ENCODE measurements at regions of chr16 and their contacts with region 1.

Region 1: GRCh38 chr16:68417711-68418301 is 30.5 kb downstream of the SMPD3 start:
- DNase-seq: peak; percentile 64 to 93 (median 81)
- ATAC-seq: peak; percentile 88
- H3K4me3 ChIP-seq: peak overlapping the region; percentile 34
- H3K4me3 Mint-ChIP-seq: peak overlapping the region; percentile 82
- H3K27ac ChIP-seq: peak overlapping the region; percentile 76 to 88
- H3K27ac Mint-ChIP-seq: peak overlapping the region; percentile 94
- H3K4me1 ChIP-seq: peaks cover 81% of the 10 kb centered on the region
- H3K4me1 Mint-ChIP-seq: peaks cover 81% of the 10 kb centered on the region
- H3K27me3 ChIP-seq: no peaks in the 10 kb centered on the region
- H3K27me3 Mint-ChIP-seq: no peaks in the 10 kb centered on the region
- CTCF ChIP-seq: no peak

Region 2: GRCh38 chr16:68356249-68356918 is 61.4 kb before region 1 on chr16:
- CTCF ChIA-PET with region 1: no interaction called
- POLR2A ChIA-PET with region 1: interaction called, 10 read pairs
- intact Hi-C with region 1: no loop called
- DNase-seq: peak; percentile 31 to 86 (median 58)
- ATAC-seq: peak; percentile 88
- H3K4me3 ChIP-seq: peak overlapping the region; percentile 47
- H3K4me3 Mint-ChIP-seq: peak overlapping the region; percentile 80
- H3K27ac ChIP-seq: peak overlapping the region in 1 of 2 donors; percentile 21
- H3K27ac Mint-ChIP-seq: peak overlapping the region; percentile 33
- H3K4me1 ChIP-seq: peaks cover 42% of the 10 kb centered on the region
- H3K4me1 Mint-ChIP-seq: peaks cover 28% of the 10 kb centered on the region
- H3K27me3 ChIP-seq: no peaks in the 10 kb centered on the region
- H3K27me3 Mint-ChIP-seq: no peaks in the 10 kb centered on the region
- CTCF ChIP-seq: no peak

Region 3: GRCh38 chr16:68406451-68407152 is 11.2 kb before region 1 on chr16:
- CTCF ChIA-PET with region 1: interaction called, 3 read pairs
- POLR2A ChIA-PET with region 1: interaction called, 13 read pairs
- intact Hi-C with region 1: no loop called
- DNase-seq: no peak
- ATAC-seq: no peak
- H3K4me3 ChIP-seq: no peak overlapping the region
- H3K4me3 Mint-ChIP-seq: no peak overlapping the region
- H3K27ac ChIP-seq: no peak overlapping the region
- H3K27ac Mint-ChIP-seq: no peak overlapping the region
- H3K4me1 ChIP-seq: peaks cover 14% of the 10 kb centered on the region
- H3K4me1 Mint-ChIP-seq: peaks cover 15% of the 10 kb centered on the region
- H3K27me3 ChIP-seq: no peaks in the 10 kb centered on the region
- H3K27me3 Mint-ChIP-seq: no peaks in the 10 kb centered on the region
- CTCF ChIP-seq: no peak

Region 4: DNA sequence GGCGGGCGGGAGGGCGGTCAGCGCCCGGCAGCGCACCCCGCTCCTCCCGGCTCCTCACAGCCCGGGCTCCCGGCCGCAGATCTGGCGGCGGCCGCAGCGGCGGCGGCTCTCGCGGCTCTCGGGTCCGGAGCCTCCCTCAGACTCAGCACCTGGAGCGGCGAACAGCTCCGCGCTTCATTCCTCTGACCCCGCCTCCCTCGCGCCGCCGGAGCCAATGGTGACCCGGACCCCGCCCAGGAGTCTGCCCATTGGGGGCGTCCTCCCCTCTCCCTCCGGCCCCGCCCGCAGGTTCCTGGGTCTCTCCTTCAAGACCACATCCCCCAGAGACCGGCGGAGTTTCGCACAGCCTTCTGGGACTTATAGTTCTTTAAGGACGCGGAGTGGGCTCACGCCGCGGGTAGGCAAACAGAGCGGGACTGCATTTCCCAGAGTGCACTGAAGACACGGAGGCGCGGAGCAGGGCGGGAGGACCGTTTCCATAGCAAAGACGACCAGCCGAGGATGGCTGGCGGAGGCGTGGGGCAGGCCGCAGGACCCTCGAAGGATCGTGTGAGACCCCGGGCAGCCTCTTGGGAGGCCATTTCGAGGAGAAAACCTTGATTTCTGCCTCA is 30.7 kb after region 1 on chr16 and contains the start of gene SMPD3:
- CTCF ChIA-PET with region 1: interaction called, 4 read pairs
- POLR2A ChIA-PET with region 1: interaction called, 15 read pairs
- intact Hi-C with region 1: loop called (anchors 1 kb)
- DNase-seq: peak; percentile 95 to 99 (median 98)
- ATAC-seq: peak; percentile 98
- H3K4me3 ChIP-seq: peak within 1 kb of the TSS; percentile 58
- H3K4me3 Mint-ChIP-seq: peak within 1 kb of the TSS; percentile 77
- H3K27ac ChIP-seq: no peak within 1 kb of the TSS
- H3K27ac Mint-ChIP-seq: no peak within 1 kb of the TSS
- H3K4me1 ChIP-seq: peaks cover 44% of the 10 kb centered on the region
- H3K4me1 Mint-ChIP-seq: peaks cover 21% of the 10 kb centered on the region
- H3K27me3 ChIP-seq: peaks cover 26 to 31% of the 10 kb centered on the region in 2 experiments
- H3K27me3 Mint-ChIP-seq: peaks cover 29% of the 10 kb centered on the region
- CTCF ChIP-seq: no peak
- total RNA-seq, gene SMPD3: 0.89 to 1.1 TPM

Region 5: DNA sequence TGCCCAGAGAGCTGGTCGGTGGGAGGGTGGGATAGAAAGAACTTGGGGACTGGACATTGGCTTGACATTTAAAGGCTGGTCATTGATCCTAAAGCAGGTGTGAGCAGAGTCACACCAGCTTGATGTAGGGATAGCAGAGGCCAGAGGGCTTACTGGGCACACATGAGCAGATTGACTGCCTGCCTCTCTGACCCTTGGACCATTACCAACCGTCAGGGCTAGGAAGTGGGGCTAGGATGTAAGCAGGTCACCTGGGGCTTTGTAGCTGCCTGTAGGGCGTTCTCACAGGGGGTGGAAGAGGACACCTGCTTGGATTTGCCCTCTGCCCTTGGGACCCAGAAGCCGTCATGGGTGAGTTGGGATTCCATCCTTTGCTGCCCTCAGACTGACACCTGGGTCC is 41.7 kb after region 1 on chr16:
- CTCF ChIA-PET with region 1: no interaction called
- POLR2A ChIA-PET with region 1: no interaction called
- intact Hi-C with region 1: no loop called
- DNase-seq: no peak
- ATAC-seq: no peak
- H3K4me3 ChIP-seq: no peak overlapping the region
- H3K4me3 Mint-ChIP-seq: no peak overlapping the region
- H3K27ac ChIP-seq: no peak overlapping the region
- H3K27ac Mint-ChIP-seq: no peak overlapping the region
- H3K4me1 ChIP-seq: no peaks in the 10 kb centered on the region
- H3K4me1 Mint-ChIP-seq: no peaks in the 10 kb centered on the region
- H3K27me3 ChIP-seq: no peaks in the 10 kb centered on the region
- H3K27me3 Mint-ChIP-seq: no peaks in the 10 kb centered on the region
- CTCF ChIP-seq: no peak

Region 6: GRCh38 chr16:68478526-68479250 is 60.9 kb after region 1 on chr16:
- CTCF ChIA-PET with region 1: no interaction called
- POLR2A ChIA-PET with region 1: no interaction called
- intact Hi-C with region 1: no loop called
- DNase-seq: no peak
- ATAC-seq: no peak
- H3K4me3 ChIP-seq: no peak overlapping the region
- H3K4me3 Mint-ChIP-seq: no peak overlapping the region
- H3K27ac ChIP-seq: no peak overlapping the region
- H3K27ac Mint-ChIP-seq: no peak overlapping the region
- H3K4me1 ChIP-seq: no peaks in the 10 kb centered on the region
- H3K4me1 Mint-ChIP-seq: no peaks in the 10 kb centered on the region
- H3K27me3 ChIP-seq: no peaks in the 10 kb centered on the region
- H3K27me3 Mint-ChIP-seq: no peaks in the 10 kb centered on the region
- CTCF ChIP-seq: no peak

Region 7: GRCh38 chr16:68520649-68521086 is 102.9 kb after region 1 on chr16:
- CTCF ChIA-PET with region 1: interaction called, 14 read pairs
- POLR2A ChIA-PET with region 1: interaction called, 3 read pairs
- intact Hi-C with region 1: no loop called
- DNase-seq: peak; percentile 77 to 95 (median 83)
- ATAC-seq: peak; percentile 98
- H3K4me3 ChIP-seq: peak overlapping the region; percentile 26
- H3K4me3 Mint-ChIP-seq: peak overlapping the region; percentile 43
- H3K27ac ChIP-seq: no peak overlapping the region
- H3K27ac Mint-ChIP-seq: peak overlapping the region; percentile 71
- H3K4me1 ChIP-seq: peaks cover 10% of the 10 kb centered on the region
- H3K4me1 Mint-ChIP-seq: peaks cover 7% of the 10 kb centered on the region
- H3K27me3 ChIP-seq: no peaks in the 10 kb centered on the region
- H3K27me3 Mint-ChIP-seq: peaks cover 5% of the 10 kb centered on the region
- CTCF ChIP-seq: peak; percentile 99